A673 (cell line): ENCODE measurements at regions of chr4 and their contacts with region 1.

Region 1: DNA sequence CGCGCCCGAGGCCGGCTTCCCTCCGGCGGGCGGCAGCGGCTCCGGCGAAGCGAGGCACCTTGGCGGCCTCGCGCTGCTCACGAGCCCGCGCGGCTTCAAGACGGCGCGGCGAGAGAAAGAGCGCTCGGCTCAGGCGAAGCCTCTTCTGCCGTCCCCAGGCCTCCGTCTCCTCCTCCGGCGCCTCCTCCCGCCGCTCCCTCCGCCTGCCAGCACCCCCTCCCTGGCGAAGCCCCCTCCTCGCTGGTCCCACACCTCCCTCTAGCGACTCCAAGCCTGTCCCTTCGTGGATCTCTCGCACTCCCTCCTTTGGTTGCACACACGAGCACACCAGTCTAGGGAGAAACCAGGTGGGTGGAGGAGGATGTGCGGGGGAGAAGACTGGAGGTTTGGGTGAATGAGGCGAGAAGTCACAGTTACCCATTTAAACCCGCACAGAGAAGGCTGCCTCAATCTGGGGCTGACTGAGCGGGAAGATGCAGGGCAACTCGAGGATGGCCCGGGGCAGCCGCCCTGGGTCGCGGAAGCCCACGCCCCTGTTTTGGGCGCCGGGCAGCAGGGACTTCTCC is at the start of gene CAMK2D:
- DNase-seq: peak; percentile 95
- H3K4me3 ChIP-seq: peak within 1 kb of the TSS; percentile 84
- H3K27ac ChIP-seq: peak within 1 kb of the TSS; percentile 99
- H3K4me1 ChIP-seq: peaks cover 32% of the 10 kb centered on the region
- H3K27me3 ChIP-seq: no peaks in the 10 kb centered on the region
- CTCF ChIP-seq: peak; percentile 82
- total RNA-seq, gene CAMK2D: 34.7 and 35.8 TPM in 2 replicates

Region 2: GRCh38 chr4:113293674-113294073 is 468.0 kb before region 1 on chr4:
- CTCF ChIA-PET with region 1: no interaction called
- POLR2A ChIA-PET with region 1: no interaction called
- intact Hi-C with region 1: loop called (anchors 2 kb)
- DNase-seq: no peak
- H3K4me3 ChIP-seq: no peak overlapping the region
- H3K27ac ChIP-seq: no peak overlapping the region
- H3K4me1 ChIP-seq: peaks cover 32% of the 10 kb centered on the region
- H3K27me3 ChIP-seq: no peaks in the 10 kb centered on the region
- CTCF ChIP-seq: no peak

Region 3: GRCh38 chr4:113547487-113548042 is 214.1 kb before region 1 on chr4:
- CTCF ChIA-PET with region 1: interaction called, 6 read pairs
- POLR2A ChIA-PET with region 1: no interaction called
- intact Hi-C with region 1: loop called (anchors 1 kb)
- DNase-seq: peak; percentile 92
- H3K4me3 ChIP-seq: no peak overlapping the region
- H3K27ac ChIP-seq: no peak overlapping the region
- H3K4me1 ChIP-seq: peaks cover 3% of the 10 kb centered on the region
- H3K27me3 ChIP-seq: no peaks in the 10 kb centered on the region
- CTCF ChIP-seq: peak; percentile 97

Region 4: DNA sequence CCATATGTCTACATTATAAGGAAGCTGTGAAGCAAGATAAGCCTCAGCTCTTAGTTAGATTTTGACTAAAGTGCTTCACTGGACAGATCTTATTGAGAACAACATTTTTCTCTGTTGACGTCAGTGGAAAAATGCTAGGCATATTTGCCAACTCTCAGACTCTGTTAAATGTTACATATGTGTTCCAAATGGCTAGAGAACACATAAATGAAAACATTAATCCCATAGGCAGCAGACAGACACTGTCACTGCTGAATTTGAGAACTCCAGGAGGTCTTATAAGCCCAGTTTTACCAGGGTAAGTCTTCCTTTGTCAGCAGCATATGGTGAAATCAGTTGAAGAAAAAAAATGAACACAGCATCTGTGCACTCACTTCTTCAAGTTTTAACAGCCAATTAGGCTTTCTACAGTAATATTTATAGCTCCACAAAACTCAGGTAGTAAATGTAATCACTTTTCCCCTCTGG is 187.0 kb before region 1 on chr4:
- CTCF ChIA-PET with region 1: no interaction called
- POLR2A ChIA-PET with region 1: no interaction called
- intact Hi-C with region 1: loop called (anchors 10 kb)
- DNase-seq: peak; percentile 89
- H3K4me3 ChIP-seq: no peak overlapping the region
- H3K27ac ChIP-seq: peak overlapping the region; percentile 68
- H3K4me1 ChIP-seq: peaks cover 38% of the 10 kb centered on the region
- H3K27me3 ChIP-seq: no peaks in the 10 kb centered on the region
- CTCF ChIP-seq: no peak

Region 5: GRCh38 chr4:113882668-113883067 is 121.0 kb after region 1 on chr4:
- CTCF ChIA-PET with region 1: no interaction called
- POLR2A ChIA-PET with region 1: no interaction called
- intact Hi-C with region 1: no loop called
- DNase-seq: no peak
- H3K4me3 ChIP-seq: no peak overlapping the region
- H3K27ac ChIP-seq: no peak overlapping the region
- H3K4me1 ChIP-seq: no peaks in the 10 kb centered on the region
- H3K27me3 ChIP-seq: no peaks in the 10 kb centered on the region
- CTCF ChIP-seq: no peak